ENCODE measurements at regions of chr1 and their contacts with region 1.

Region 1: GRCh38 chr1:206446688-206447421 is 23.4 kb upstream of the IKBKE start:
- DNase-seq: no peak
- ATAC-seq: no peak
- H3K4me3 ChIP-seq: no peak overlapping the region
- H3K27ac ChIP-seq: no peak overlapping the region
- H3K4me1 ChIP-seq: peaks cover 4 to 25% (median 19%) of the 10 kb centered on the region in 9 donors
- H3K27me3 ChIP-seq: no peaks in the 10 kb centered on the region
- CTCF ChIP-seq: no peak

Region 2: GRCh38 chr1:205812878-205813754 is 633.7 kb before region 1 on chr1 and contains the start of gene SLC41A1:
- intact Hi-C with region 1: no loop called
- DNase-seq: peak; percentile 91 to 94
- ATAC-seq: peak; percentile 88 to 95 (median 92)
- H3K4me3 ChIP-seq: peak within 1 kb of the TSS; percentile 65 to 93 (median 77)
- H3K27ac ChIP-seq: peak within 1 kb of the TSS; percentile 69 to 95 (median 92)
- H3K4me1 ChIP-seq: peaks cover 0 to 73% (median 38%) of the 10 kb centered on the region in 9 donors
- H3K27me3 ChIP-seq: peaks cover 0 to 8% (median 0%) of the 10 kb centered on the region in 7 donors
- CTCF ChIP-seq: no peak
- total RNA-seq, gene SLC41A1: 247 to 566 (median 322) TPM

Region 3: GRCh38 chr1:206430031-206430983 is 16.5 kb before region 1 on chr1:
- intact Hi-C with region 1: loop called in 1 of 10 experiments (anchors 2 kb)
- DNase-seq: peak in 1 of 2 donors; percentile 59
- ATAC-seq: peak; percentile 59 to 93 (median 82)
- H3K4me3 ChIP-seq: no peak overlapping the region
- H3K27ac ChIP-seq: peak overlapping the region in 9 of 10 donors; percentile 2 to 72 (median 56)
- H3K4me1 ChIP-seq: peaks cover 0 to 26% (median 21%) of the 10 kb centered on the region in 9 donors
- H3K27me3 ChIP-seq: no peaks in the 10 kb centered on the region
- CTCF ChIP-seq: peak in 3 of 9 donors; percentile 17 to 33 (median 22)

Measured in heart right ventricle (tissue), 16 donors.